H1 (cell line): ENCODE measurements at regions of chr1 and their contacts with region 1.

Region 1: DNA sequence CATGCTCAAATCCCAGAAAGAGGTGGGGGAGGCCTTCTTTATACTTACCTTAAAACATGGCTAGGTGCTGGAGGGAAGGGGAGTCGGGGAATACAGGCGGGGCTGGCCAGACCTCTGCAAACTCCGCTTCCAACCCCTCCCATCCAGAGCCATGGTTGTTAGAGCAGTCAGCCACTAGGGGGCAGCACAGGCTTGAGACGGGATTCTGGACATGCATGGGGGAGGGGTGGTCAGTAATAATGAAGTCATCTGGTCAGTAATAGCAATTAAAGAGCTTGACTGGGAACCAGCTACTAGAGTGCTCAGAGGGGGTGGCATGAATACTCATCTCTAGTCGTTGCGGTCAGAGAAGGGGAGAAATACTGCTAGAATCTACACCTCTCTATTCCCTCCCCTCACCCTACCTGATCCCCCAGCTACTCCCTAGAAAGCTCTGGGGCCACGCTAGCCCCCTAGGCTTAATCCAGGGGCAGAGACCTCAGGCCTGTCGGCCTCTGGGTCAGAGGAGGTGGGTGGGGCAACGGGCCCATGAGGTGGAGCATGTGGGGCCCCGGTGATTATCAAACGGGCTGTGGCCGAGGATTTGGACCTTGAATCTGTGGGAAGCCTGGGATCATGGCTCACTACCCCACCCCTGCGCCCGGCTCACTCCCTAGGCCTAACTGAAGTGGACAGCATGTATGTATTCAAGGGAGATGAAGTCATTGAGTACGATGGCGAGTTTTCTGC is 2.9 kb downstream of the CASQ1 start:
- DNase-seq: peak; percentile 84 to 98
- H3K4me3 ChIP-seq: 0 out of 8 replicates have a peak overlapping the region, but pooled peaks of 1 of the 4 experiments have one; percentile 12
- H3K27ac ChIP-seq: no peak overlapping the region
- H3K4me1 ChIP-seq: peaks cover 3 to 26% (median 8%) of the 10 kb centered on the region in 4 experiments; a peak in 6 of 7 replicates
- H3K27me3 ChIP-seq: no peaks in the 10 kb centered on the region; a peak in 1 of 7 replicates
- CTCF ChIP-seq: peak; percentile 94 to 95 (median 94)
- EP300 ChIP-seq: no peak
- POLR2A ChIP-seq: no peak
- RAD21 ChIP-seq: peak; percentile 95 to 96

Region 2: DNA sequence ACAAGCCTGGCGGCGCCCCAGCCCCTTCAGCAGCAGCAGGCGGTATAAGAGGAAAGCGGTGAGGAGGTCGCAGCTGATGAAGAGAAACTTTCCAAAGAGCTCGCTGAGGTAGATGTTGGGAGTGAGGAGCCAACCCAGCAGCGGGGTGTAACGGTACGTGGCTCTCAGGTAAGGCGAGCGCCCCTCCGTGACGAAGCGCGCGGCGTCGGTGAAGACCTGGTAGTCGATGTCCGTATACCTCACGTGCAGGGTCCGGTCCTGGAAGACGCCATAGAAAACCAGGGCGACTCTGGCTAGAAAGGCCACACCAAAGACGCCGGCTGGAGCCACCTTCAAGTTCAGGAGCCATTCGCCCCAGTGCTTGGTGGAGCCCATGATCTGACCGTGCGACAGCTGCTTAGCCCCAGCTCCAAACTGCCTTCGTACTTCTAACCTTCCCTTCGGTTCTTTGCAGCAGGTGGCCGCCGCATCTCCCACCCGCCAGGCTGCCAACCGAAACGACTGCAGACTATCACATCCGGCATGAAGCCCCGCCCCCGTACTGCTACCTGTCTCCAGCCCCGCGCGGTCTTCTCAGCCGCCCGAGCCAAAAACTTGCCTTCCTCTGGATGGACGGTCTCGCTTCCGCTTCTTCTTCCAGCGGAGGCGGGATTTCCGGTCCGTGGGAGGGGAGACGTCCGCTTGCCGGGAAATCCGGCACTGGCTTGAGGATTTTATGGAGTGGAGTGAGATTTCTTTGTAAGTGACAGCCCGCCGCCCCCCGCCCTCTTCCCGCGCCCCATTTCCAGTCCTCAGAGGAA is 161.7 kb before region 1 on chr1 and contains the start of gene PIGM:
- CTCF ChIA-PET with region 1: no interaction called
- POLR2A ChIA-PET with region 1: no interaction called
- DNase-seq: peak; percentile 91 to 95
- H3K4me3 ChIP-seq: peak within 1 kb of the TSS; percentile 72 to 88 (median 80)
- H3K27ac ChIP-seq: peak within 1 kb of the TSS; percentile 72
- H3K4me1 ChIP-seq: peaks cover 0 to 6% (median 2%) of the 10 kb centered on the region in 4 experiments; a peak in 5 of 7 replicates
- H3K27me3 ChIP-seq: no peaks in the 10 kb centered on the region; a peak in 2 of 7 replicates
- CTCF ChIP-seq: no peak
- EP300 ChIP-seq: peak in 1 of 2 experiments; percentile 63; a peak in 1 of 3 replicates
- POLR2A ChIP-seq: peak in 1 of 2 experiments; percentile 76; a peak in 2 of 3 replicates
- RAD21 ChIP-seq: no peak
- total RNA-seq, gene PIGM: 5.1 and 5.4 TPM in 2 replicates

Region 3: DNA sequence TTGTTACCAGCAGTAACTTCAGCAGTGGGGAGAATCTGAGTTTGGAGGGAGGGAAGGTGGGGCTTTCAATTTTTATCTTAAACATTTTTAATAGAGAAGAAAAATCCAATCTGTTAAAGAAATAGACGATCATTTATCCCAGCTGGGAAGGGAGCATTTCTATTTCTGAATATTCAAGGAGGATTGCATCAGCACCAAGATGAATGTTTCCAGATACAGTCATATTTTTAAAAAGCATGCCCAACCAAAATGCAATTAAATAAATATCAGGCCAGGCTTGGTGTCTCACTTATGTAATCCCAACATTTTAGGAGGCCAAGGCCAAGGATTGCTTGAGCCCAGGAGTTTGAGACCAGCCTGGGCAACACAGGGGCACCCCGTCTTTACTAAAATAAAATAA is 43.5 kb before region 1 on chr1:
- CTCF ChIA-PET with region 1: interaction called, 10 read pairs
- POLR2A ChIA-PET with region 1: interaction called, 3 read pairs
- DNase-seq: no peak
- H3K4me3 ChIP-seq: no peak overlapping the region
- H3K27ac ChIP-seq: no peak overlapping the region
- H3K4me1 ChIP-seq: 0 out of 7 replicates have a peak, but pooled peaks cover 0 to 2% (median 0%) of the 10 kb centered on the region in 4 experiments
- H3K27me3 ChIP-seq: no peaks in the 10 kb centered on the region; a peak in 1 of 7 replicates
- CTCF ChIP-seq: no peak
- EP300 ChIP-seq: no peak
- POLR2A ChIP-seq: no peak
- RAD21 ChIP-seq: no peak

Region 4: GRCh38 chr1:160169553-160170399 is 23.5 kb before region 1 on chr1:
- CTCF ChIA-PET with region 1: interaction called, 257 read pairs
- POLR2A ChIA-PET with region 1: interaction called, 19 read pairs
- DNase-seq: peak; percentile 79 to 86
- H3K4me3 ChIP-seq: peak overlapping the region in 3 of 4 experiments; percentile 7 to 50 (median 13); a peak in 5 of 8 replicates
- H3K27ac ChIP-seq: peak overlapping the region; percentile 46; the same call in 1 of the 2 replicates
- H3K4me1 ChIP-seq: peaks cover 12 to 28% (median 22%) of the 10 kb centered on the region in 4 experiments; a peak in 6 of 7 replicates
- H3K27me3 ChIP-seq: peaks cover 0 to 2% (median under 1%) of the 10 kb centered on the region in 4 experiments; a peak in 2 of 7 replicates
- CTCF ChIP-seq: no peak
- EP300 ChIP-seq: peak in 1 of 2 experiments; percentile 96; a peak in 2 of 3 replicates
- POLR2A ChIP-seq: no peak
- RAD21 ChIP-seq: no peak

Region 5: GRCh38 chr1:160205242-160206035 is 12.2 kb after region 1 on chr1 and contains the start of gene PEA15:
- CTCF ChIA-PET with region 1: interaction called, 195 read pairs
- POLR2A ChIA-PET with region 1: interaction called, 61 read pairs
- DNase-seq: peak in 1 of 2 experiments; percentile 82
- H3K4me3 ChIP-seq: peak within 1 kb of the TSS; percentile 70 to 99 (median 86)
- H3K27ac ChIP-seq: peak within 1 kb of the TSS; percentile 75; the same call in 1 of the 2 replicates
- H3K4me1 ChIP-seq: peaks cover 13 to 35% (median 20%) of the 10 kb centered on the region in 4 experiments
- H3K27me3 ChIP-seq: no peaks in the 10 kb centered on the region
- CTCF ChIP-seq: no peak
- EP300 ChIP-seq: no peak
- POLR2A ChIP-seq: peak in 1 of 2 experiments; percentile 48; a peak in 2 of 3 replicates
- RAD21 ChIP-seq: no peak
- total RNA-seq, gene PEA15: 75.1 and 78.8 TPM in 2 replicates

Region 6: GRCh38 chr1:160232911-160233310 is 39.7 kb after region 1 on chr1:
- CTCF ChIA-PET with region 1: interaction called, 16 read pairs
- POLR2A ChIA-PET with region 1: interaction called, 3 read pairs
- DNase-seq: no peak
- H3K4me3 ChIP-seq: no peak overlapping the region
- H3K27ac ChIP-seq: no peak overlapping the region
- H3K4me1 ChIP-seq: no peaks in the 10 kb centered on the region
- H3K27me3 ChIP-seq: no peaks in the 10 kb centered on the region
- CTCF ChIP-seq: no peak
- EP300 ChIP-seq: no peak
- POLR2A ChIP-seq: no peak
- RAD21 ChIP-seq: no peak